ENCODE measurements at regions of chr17 and their contacts with region 1.

Region 1: DNA sequence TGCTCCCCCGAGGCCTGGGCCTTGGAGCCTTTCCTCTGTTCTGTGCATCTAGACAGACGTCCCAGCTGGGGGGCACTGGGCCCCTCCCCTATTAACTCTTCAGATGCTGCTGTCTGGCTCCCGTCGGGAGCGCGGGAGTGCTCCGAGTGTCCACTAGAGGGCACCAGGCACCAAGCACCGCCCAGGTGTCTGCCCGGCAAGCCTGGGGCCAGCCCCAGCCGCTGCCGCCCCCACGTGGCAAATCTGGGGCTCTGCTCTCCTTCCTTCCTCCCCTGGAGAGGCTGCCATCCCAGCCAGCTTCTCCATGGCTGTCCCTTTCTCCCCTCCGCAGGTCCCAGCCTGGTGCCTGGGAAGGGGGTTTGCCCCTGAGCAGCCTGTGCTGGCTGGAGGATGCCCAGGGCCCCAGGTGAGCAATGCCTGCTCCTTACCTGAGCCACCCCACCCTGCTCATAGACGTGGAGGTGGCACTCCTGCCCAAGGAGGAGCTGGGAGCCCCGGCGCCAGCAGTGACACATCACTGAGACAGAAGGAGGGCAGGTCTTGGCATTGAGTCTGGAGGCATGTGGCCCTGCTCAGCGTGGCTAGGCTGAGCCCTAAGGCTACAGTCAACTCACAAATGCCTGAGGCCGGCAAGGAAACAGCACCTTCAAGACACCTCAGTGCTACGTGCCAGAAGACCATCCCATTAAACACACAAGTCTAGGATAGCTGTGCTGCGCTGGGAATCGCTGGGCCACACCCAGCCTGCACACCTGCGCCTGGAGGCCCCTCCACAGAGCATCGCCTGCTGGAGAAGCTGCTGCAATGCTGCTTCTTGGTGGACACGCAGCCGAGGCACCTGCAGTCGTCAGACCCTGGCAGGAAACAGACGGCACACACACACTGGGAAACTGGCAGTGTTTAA is 19.7 kb downstream of the TMEM235 start:
- DNase-seq: peak; percentile 94
- ATAC-seq: peak; percentile 70
- H3K4me3 Mint-ChIP-seq: peak overlapping the region; percentile 41
- H3K27ac Mint-ChIP-seq: peak overlapping the region; percentile 63
- H3K4me1 Mint-ChIP-seq: peaks cover 42% of the 10 kb centered on the region
- H3K27me3 Mint-ChIP-seq: no peaks in the 10 kb centered on the region

Region 2: GRCh38 chr17:78082988-78083387 is 168.2 kb before region 1 on chr17:
- CTCF ChIA-PET with region 1: interaction called, 12 read pairs
- POLR2A ChIA-PET with region 1: no interaction called
- intact Hi-C with region 1: loop called in 1 of 2 experiments (anchors 1 kb)
- DNase-seq: no peak
- ATAC-seq: no peak
- H3K4me3 Mint-ChIP-seq: no peak overlapping the region
- H3K27ac Mint-ChIP-seq: no peak overlapping the region
- H3K4me1 Mint-ChIP-seq: no peaks in the 10 kb centered on the region
- H3K27me3 Mint-ChIP-seq: no peaks in the 10 kb centered on the region

Region 3: DNA sequence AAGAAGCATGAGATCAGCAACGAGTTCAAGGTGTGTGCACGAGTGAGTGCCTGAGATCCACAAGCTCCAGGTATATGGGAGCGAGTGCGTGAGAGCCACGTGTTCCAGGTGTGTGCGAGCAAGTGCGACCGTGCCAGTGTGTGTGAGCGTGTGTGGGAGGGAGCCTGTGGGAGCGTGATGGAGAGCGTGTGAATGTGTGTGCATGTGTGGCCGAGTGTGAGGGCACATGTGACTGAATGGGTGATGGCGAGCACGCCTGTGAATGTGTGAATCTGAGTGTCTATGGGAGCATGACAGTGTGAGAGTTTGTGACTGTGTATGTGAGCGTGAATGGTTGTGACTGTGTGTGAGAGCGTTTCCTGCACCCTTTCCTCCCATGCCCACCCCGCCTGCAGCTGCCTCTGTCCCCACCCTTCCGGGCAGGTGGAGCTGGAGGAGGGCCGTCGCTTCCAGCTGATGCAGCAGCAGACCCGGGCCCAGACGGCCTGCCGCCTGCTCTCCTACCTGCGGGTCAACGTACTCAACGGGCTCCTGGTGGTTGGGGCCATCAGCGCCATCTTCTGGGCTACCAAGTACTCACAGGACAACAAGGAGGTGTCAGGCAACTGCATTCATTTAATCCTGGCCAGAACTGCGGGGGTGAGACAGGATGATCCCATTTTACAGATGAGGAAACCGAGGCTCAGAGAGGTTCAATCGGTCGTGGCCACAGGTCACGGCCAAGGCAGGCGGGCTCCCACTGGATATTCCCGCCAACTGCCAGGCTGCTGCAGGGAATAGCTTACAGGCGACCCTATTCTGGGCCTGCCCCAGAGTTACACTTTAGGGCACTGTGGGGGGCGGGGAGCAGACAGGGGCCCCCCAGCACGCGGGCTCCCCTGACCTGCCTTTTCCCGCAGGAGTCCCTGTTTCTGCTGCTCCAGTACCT is 116.9 kb before region 1 on chr17:
- CTCF ChIA-PET with region 1: no interaction called
- POLR2A ChIA-PET with region 1: no interaction called
- intact Hi-C with region 1: loop called in 1 of 2 experiments (anchors 5 kb)
- DNase-seq: peak; percentile 88
- ATAC-seq: peak; percentile 21
- H3K4me3 Mint-ChIP-seq: peak overlapping the region; percentile 94
- H3K27ac Mint-ChIP-seq: peak overlapping the region; percentile 73
- H3K4me1 Mint-ChIP-seq: peaks cover 72% of the 10 kb centered on the region
- H3K27me3 Mint-ChIP-seq: no peaks in the 10 kb centered on the region

Region 4: DNA sequence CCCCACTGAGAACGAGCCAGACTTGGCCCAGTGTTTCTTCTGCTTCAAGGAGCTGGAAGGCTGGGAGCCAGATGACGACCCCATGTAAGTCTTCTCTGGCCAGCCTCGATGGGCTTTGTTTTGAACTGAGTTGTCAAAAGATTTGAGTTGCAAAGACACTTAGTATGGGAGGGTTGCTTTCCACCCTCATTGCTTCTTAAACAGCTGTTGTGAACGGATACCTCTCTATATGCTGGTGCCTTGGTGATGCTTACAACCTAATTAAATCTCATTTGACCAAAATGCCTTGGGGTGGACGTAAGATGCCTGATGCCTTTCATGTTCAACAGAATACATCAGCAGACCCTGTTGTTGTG is 36.5 kb before region 1 on chr17:
- CTCF ChIA-PET with region 1: interaction called, 7 read pairs
- POLR2A ChIA-PET with region 1: no interaction called
- intact Hi-C with region 1: loop called (anchors 1 kb)
- DNase-seq: no peak
- ATAC-seq: no peak
- H3K4me3 Mint-ChIP-seq: peak overlapping the region; percentile 89
- H3K27ac Mint-ChIP-seq: peak overlapping the region; percentile 78
- H3K4me1 Mint-ChIP-seq: peaks cover 5% of the 10 kb centered on the region
- H3K27me3 Mint-ChIP-seq: no peaks in the 10 kb centered on the region

Region 5: GRCh38 chr17:78263063-78263743 is 12.1 kb after region 1 on chr17:
- CTCF ChIA-PET with region 1: interaction called, 22 read pairs
- POLR2A ChIA-PET with region 1: no interaction called
- intact Hi-C with region 1: no loop called
- DNase-seq: peak; percentile 51
- ATAC-seq: no peak
- H3K4me3 Mint-ChIP-seq: no peak overlapping the region
- H3K27ac Mint-ChIP-seq: peak overlapping the region; percentile 79
- H3K4me1 Mint-ChIP-seq: peaks cover 37% of the 10 kb centered on the region
- H3K27me3 Mint-ChIP-seq: no peaks in the 10 kb centered on the region

Region 6: DNA sequence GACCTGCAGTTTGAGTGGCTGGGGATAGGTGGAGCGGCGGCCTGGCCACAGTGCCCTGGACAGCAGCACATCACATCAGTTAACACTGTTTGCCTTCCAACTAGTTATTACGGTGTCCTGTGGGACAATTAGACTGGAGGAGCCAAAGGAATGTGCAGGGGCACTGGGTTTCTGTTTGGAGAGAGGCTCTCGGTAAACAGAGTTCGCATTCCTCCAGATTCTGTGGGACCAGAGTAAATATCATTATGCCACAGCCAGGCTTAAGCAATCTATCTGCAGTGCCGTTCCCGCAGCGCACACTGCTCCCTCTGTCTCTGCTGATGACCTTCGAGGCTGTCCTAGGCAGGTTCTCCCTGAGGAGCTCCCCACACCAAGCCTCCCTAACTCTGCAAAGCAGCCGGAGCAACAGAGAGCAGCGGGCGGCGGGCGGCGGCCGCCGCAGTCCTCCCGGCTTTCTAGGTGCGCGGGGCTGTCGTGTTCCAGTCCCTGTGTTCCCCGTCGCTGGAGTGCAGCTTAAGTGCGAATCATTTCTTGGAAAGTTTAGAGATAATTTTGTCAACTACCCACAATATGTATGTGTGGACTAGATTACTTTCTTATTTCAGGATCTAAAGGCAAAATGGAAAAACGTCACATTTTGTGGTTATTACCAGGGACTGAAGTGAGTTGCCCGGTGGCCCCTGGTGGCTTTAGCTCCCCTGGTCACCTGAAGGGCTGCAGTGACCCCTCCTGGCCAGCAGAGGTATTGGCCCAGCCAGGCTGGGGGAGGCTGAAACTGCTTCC is 170.5 kb after region 1 on chr17:
- CTCF ChIA-PET with region 1: interaction called, 24 read pairs
- POLR2A ChIA-PET with region 1: no interaction called
- intact Hi-C with region 1: loop called (anchors 1 to 2 kb)
- DNase-seq: peak; percentile 85
- ATAC-seq: peak; percentile 86
- H3K4me3 Mint-ChIP-seq: no peak overlapping the region
- H3K27ac Mint-ChIP-seq: peak overlapping the region; percentile 34
- H3K4me1 Mint-ChIP-seq: peaks cover 38% of the 10 kb centered on the region
- H3K27me3 Mint-ChIP-seq: no peaks in the 10 kb centered on the region

Measured in activated CD4-positive, alpha-beta T cell treated with anti-CD3 and anti-CD28 coated beads for 36 hours (primary cell).